Esophagus muscularis mucosa (tissue), 4 donors: ENCODE measurements at regions of chr6 and their contacts with region 1.

Region 1: DNA sequence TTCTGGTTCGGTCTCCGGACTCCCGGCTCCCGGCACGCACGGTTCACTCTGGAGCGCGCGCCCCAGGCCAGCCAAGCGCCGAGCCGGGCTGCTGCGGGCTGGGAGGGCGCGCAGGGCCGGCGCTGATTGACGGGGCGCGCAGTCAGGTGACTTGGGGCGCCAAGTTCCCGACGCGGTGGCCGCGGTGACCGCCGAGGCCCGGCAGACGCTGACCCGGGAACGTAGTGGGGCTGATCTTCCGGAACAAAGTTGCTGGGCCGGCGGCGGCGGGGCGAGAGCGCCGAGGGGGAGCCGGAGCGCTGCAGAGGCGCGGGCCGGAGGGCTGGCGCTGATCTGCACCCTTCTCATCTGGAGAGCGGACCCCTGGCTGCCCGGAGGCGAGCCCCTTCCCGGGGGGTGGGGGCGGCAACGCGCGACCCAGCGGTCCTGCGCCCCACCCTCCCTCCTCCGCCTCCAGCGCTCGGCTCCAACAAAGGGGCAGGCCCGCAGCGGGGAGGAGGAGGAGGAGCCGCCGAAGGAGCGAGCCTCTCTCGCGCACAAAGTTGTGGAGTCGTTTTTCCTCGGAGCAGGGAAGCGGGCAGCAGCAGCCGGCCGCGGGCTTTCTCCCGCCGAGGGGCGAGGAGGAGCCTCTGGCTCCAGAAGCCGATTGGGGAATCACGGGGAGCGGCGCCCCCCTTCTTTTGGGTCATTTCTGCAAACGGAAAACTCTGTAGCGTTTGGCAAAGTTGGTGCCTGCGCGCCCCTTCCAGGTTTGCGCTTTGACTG is at the start of gene UTRN:
- DNase-seq: peak; percentile 93
- H3K4me3 ChIP-seq: peak within 1 kb of the TSS; percentile 76 to 93 (median 88)
- H3K27ac ChIP-seq: peak within 1 kb of the TSS; percentile 91 to 97 (median 96)
- H3K4me1 ChIP-seq: peaks cover 14 to 24% (median 22%) of the 10 kb centered on the region in 4 donors
- H3K27me3 ChIP-seq: no peaks in the 10 kb centered on the region
- CTCF ChIP-seq: no peak
- EP300 ChIP-seq: no peak
- POLR2A ChIP-seq: peak; percentile 3
- total RNA-seq, gene UTRN: 98.6 to 112 (median 102) TPM

Region 2: DNA sequence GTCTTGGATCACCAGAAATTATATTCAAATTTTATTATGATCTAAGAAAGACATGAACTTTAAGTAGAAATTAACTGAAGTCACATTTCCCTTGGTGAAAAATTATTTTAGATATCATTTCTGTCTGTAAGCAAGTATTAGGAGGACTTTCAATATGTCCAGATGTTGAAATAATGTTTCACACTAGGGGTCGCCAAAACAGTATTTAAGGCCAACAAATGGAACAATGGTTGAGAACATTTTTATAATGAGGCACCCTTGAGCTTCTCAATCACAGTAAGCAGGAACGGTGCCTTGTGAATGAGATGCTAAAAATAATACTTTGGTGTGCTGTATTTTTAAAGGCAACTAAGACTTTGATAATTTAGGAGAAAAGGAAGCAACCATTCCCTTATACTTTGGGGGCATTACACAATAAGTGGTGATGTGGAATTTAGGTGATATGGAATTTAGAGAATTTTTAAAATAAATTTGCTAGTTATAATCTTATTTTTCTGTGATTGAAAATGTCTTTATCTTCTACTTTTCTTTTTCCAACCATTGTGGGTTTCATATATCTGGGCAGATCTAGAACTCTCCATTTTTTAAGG is 180.0 kb before region 1 on chr6:
- intact Hi-C with region 1: loop called (anchors 5 kb)
- DNase-seq: no peak
- H3K4me3 ChIP-seq: no peak overlapping the region
- H3K27ac ChIP-seq: no peak overlapping the region
- H3K4me1 ChIP-seq: no peaks in the 10 kb centered on the region
- H3K27me3 ChIP-seq: no peaks in the 10 kb centered on the region
- CTCF ChIP-seq: peak; percentile 61 to 64 (median 62)
- EP300 ChIP-seq: no peak
- POLR2A ChIP-seq: no peak

Region 3: DNA sequence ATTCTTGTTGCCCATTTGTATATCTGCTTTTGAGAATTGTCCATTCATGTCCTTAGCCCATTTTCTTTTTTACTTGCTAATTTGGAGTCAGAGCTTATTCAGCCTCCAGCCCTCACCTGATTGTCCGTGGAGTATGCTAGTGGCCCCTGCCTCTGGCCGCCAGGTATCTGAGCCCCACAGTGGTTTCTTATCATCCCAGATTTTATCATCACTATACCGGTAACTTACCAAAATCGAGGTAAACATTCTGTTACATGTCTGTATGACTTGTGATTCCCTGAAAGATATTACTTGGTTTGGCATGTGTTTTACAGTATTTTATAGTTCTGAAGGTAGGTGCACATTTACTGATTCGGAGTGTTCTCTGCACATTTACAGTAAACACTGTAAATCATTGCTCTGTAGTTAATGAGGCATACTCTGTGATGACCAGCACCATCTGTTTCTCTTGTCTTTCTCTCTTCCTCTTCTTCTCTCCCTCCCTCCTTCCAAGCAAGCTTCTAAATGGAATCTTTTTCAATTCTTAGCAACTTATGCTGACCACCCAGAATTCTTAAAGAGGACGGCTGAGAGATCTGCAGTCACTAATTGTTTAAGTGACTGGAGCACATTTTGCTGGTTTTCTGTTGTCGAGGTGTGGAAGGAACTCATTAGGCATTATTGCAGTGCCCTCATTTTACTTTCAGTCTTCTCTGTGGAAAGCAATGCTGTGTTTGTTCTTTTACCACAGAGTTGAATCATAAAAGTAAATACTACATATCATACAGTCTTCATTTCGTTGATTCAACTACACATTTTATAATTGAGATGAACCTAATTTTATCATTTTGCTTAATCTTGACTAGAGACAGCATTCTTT is 126.6 kb after region 1 on chr6:
- intact Hi-C with region 1: no loop called
- DNase-seq: no peak
- H3K4me3 ChIP-seq: no peak overlapping the region
- H3K27ac ChIP-seq: no peak overlapping the region
- H3K4me1 ChIP-seq: peaks cover 18 to 40% (median 24%) of the 10 kb centered on the region in 4 donors
- H3K27me3 ChIP-seq: no peaks in the 10 kb centered on the region
- CTCF ChIP-seq: no peak
- EP300 ChIP-seq: no peak
- POLR2A ChIP-seq: no peak

Region 4: GRCh38 chr6:144482142-144482541 is 197.2 kb after region 1 on chr6:
- intact Hi-C with region 1: loop called (anchors 5 kb)
- DNase-seq: no peak
- H3K4me3 ChIP-seq: no peak overlapping the region
- H3K27ac ChIP-seq: no peak overlapping the region
- H3K4me1 ChIP-seq: peaks cover 11 to 19% (median 12%) of the 10 kb centered on the region in 4 donors
- H3K27me3 ChIP-seq: no peaks in the 10 kb centered on the region
- CTCF ChIP-seq: peak; percentile 59 to 73 (median 66)
- EP300 ChIP-seq: no peak
- POLR2A ChIP-seq: no peak